ENCODE measurements at regions of chr4 and their contacts with region 1.

Region 1: DNA sequence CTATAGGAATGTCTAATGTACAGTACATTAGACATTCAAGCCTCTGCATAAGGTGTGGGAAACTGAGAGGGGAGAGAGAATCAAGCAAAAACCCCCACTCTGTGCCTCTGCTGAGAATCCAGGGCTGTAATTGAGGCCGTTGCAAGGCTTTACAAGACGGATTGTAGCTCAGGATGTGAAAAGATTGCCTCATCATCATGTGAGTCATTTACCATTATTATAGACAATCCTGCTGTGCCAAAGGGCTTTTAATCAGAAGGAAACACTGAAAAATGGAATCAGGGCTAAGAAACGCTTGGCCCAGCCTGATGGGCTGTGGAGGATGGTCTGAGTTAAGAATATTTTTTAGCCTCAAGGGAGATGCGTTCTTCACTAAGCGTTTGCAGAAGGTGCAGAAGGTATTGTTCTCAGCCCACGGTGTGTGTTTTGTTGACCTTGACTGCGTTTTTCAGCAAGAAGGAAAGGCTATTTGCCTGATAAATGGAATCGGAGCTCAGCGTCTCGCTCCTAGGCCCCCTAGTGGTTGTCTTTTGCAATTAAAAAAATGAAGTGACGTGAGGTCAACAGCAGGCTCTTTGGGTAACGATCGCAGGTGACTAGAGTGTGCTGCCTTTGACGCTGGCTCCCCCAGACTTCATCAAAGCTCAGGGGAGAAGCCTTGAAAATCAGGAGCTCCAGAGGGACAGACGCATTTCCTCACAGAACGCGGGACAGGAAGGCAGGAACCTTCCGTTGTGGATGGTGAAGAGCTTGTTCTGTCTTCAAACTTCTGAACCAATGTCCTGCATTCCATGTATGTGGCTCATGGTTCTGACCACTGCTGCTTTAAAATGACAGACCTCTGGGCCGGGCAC is 18.1 kb upstream of the CHRNA9 start:
- DNase-seq: peak; percentile 73
- H3K4me3 Mint-ChIP-seq: peak overlapping the region; percentile 68
- H3K27ac Mint-ChIP-seq: peak overlapping the region; percentile 90
- H3K4me1 Mint-ChIP-seq: peaks cover 59% of the 10 kb centered on the region
- H3K27me3 Mint-ChIP-seq: no peaks in the 10 kb centered on the region

Region 2: GRCh38 chr4:40056716-40057585 is 260.1 kb before region 1 on chr4 and contains the start of gene N4BP2:
- CTCF ChIA-PET with region 1: interaction called, 16 read pairs
- DNase-seq: peak; percentile 76
- H3K4me3 Mint-ChIP-seq: peak within 1 kb of the TSS; percentile 96
- H3K27ac Mint-ChIP-seq: peak within 1 kb of the TSS; percentile 98
- H3K4me1 Mint-ChIP-seq: peaks cover 44% of the 10 kb centered on the region
- H3K27me3 Mint-ChIP-seq: peaks cover 5% of the 10 kb centered on the region

Region 3: GRCh38 chr4:40152637-40153036 is 164.4 kb before region 1 on chr4:
- CTCF ChIA-PET with region 1: interaction called, 11 read pairs
- DNase-seq: peak; percentile 31
- H3K4me3 Mint-ChIP-seq: no peak overlapping the region
- H3K27ac Mint-ChIP-seq: peak overlapping the region; percentile 24
- H3K4me1 Mint-ChIP-seq: peaks cover 36% of the 10 kb centered on the region
- H3K27me3 Mint-ChIP-seq: no peaks in the 10 kb centered on the region

Region 4: GRCh38 chr4:40193016-40193571 is 123.9 kb before region 1 on chr4:
- CTCF ChIA-PET with region 1: interaction called, 16 read pairs
- DNase-seq: peak; percentile 72
- H3K4me3 Mint-ChIP-seq: peak overlapping the region; percentile 93
- H3K27ac Mint-ChIP-seq: peak overlapping the region; percentile 96
- H3K4me1 Mint-ChIP-seq: peaks cover 75% of the 10 kb centered on the region
- H3K27me3 Mint-ChIP-seq: peaks cover 4% of the 10 kb centered on the region

Region 5: GRCh38 chr4:40283968-40284367 is 33.0 kb before region 1 on chr4:
- CTCF ChIA-PET with region 1: interaction called, 13 read pairs
- DNase-seq: peak; percentile 84
- H3K4me3 Mint-ChIP-seq: no peak overlapping the region
- H3K27ac Mint-ChIP-seq: peak overlapping the region; percentile 87
- H3K4me1 Mint-ChIP-seq: peaks cover 61% of the 10 kb centered on the region
- H3K27me3 Mint-ChIP-seq: no peaks in the 10 kb centered on the region

Region 6: DNA sequence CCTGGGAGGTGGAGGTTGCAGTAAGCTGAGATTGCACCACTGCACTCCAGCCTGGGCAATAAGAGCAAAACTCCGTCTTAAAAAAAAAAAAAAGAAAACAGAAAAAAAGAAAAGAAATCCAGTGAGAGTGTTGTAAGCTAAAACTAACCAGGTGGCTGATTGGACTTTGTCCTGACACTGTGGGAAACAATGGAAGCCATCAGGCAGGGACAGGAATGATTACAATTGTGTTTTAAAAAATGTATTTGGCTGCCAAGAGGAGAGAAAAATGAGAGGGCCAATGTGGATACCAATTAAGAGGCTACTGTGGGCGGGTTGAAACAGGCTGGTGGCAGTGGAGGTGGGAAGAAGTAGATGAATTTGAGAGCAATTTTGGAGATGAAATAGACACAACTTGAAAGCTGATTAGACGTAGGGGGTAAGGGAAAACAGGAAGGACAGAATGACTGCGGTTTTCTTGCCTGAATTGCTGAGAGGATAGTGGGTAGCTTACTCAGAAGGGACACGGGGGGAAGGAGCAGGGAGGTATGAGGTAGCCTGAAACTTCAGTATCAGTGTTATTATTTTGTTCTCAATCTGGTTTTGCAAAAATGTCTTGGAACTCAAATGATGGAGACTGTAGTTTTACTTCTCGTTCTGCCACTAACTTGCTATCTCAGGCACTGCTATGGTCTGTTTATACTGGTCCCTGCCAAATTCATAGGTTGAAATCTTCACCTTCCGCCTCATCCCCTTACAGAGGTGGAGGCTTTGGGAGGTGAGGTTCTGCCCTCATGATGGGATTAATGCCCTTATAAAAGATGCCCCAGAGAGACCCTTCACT is 27.4 kb before region 1 on chr4:
- CTCF ChIA-PET with region 1: interaction called, 13 read pairs
- DNase-seq: peak; percentile 33
- H3K4me3 Mint-ChIP-seq: peak overlapping the region; percentile 24
- H3K27ac Mint-ChIP-seq: peak overlapping the region; percentile 85
- H3K4me1 Mint-ChIP-seq: peaks cover 62% of the 10 kb centered on the region
- H3K27me3 Mint-ChIP-seq: no peaks in the 10 kb centered on the region

Region 7: DNA sequence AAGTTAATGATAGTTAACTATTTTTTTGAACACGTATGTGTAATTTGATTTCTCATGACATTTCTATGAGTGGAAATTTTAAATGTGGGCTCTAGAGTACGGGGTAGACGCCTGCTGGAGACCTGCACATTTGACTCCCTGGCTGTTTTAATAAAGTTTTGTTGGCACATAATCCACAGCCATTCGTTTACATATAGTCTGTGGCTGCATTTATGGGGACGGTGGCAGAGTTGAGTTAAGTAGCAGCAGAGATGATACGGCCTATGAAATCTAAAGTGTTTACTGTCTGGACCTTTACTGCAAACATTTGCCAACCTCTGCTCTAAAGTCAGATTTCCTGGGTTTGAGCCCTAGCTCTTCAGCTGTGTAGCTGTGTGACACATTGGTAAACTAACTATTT is 136.9 kb after region 1 on chr4:
- CTCF ChIA-PET with region 1: no interaction called
- DNase-seq: no peak
- H3K4me3 Mint-ChIP-seq: no peak overlapping the region
- H3K27ac Mint-ChIP-seq: no peak overlapping the region
- H3K4me1 Mint-ChIP-seq: peaks cover 36% of the 10 kb centered on the region
- H3K27me3 Mint-ChIP-seq: no peaks in the 10 kb centered on the region